ENCODE measurements at regions of chr15 and their contacts with region 1.

Region 1: GRCh38 chr15:98881526-98882520 is 125.8 kb downstream of the PGPEP1L start:
- DNase-seq: no peak
- ATAC-seq: peak; percentile 85
- H3K4me3 ChIP-seq: no peak overlapping the region
- H3K27ac ChIP-seq: no peak overlapping the region
- H3K4me1 ChIP-seq: no peaks in the 10 kb centered on the region
- H3K27me3 ChIP-seq: no peaks in the 10 kb centered on the region
- CTCF ChIP-seq: peak; percentile 50 to 58 (median 53); a peak in 5 of 6 replicates
- EP300 ChIP-seq: no peak
- POLR2A ChIP-seq: no peak
- RAD21 ChIP-seq: peak; percentile 50

Region 2: GRCh38 chr15:98518823-98519561 is 362.8 kb before region 1 on chr15:
- CTCF ChIA-PET with region 1: interaction called, 8 read pairs
- POLR2A ChIA-PET with region 1: no interaction called
- RAD21 ChIA-PET with region 1: interaction called, 7 read pairs
- SMC1A ChIA-PET with region 1: no interaction called
- in situ Hi-C with region 1: no loop called
- intact Hi-C with region 1: loop called (anchors 10 kb)
- DNase-seq: no peak
- ATAC-seq: peak; percentile 95
- H3K4me3 ChIP-seq: no peak overlapping the region
- H3K27ac ChIP-seq: no peak overlapping the region
- H3K4me1 ChIP-seq: no peaks in the 10 kb centered on the region
- H3K27me3 ChIP-seq: no peaks in the 10 kb centered on the region
- CTCF ChIP-seq: peak; percentile 64 to 75 (median 68)
- EP300 ChIP-seq: no peak
- POLR2A ChIP-seq: no peak
- RAD21 ChIP-seq: peak; percentile 75

Region 3: GRCh38 chr15:98653686-98654085 is 228.1 kb before region 1 on chr15:
- CTCF ChIA-PET with region 1: no interaction called
- POLR2A ChIA-PET with region 1: no interaction called
- RAD21 ChIA-PET with region 1: no interaction called
- SMC1A ChIA-PET with region 1: no interaction called
- in situ Hi-C with region 1: no loop called
- intact Hi-C with region 1: no loop called
- DNase-seq: no peak
- ATAC-seq: no peak
- H3K4me3 ChIP-seq: no peak overlapping the region
- H3K27ac ChIP-seq: no peak overlapping the region
- H3K4me1 ChIP-seq: no peaks in the 10 kb centered on the region; the same call in 1 of the 2 replicates
- H3K27me3 ChIP-seq: peaks cover 14 to 25% of the 10 kb centered on the region in 2 experiments
- CTCF ChIP-seq: no peak
- EP300 ChIP-seq: no peak
- POLR2A ChIP-seq: no peak
- RAD21 ChIP-seq: no peak

Region 4: DNA sequence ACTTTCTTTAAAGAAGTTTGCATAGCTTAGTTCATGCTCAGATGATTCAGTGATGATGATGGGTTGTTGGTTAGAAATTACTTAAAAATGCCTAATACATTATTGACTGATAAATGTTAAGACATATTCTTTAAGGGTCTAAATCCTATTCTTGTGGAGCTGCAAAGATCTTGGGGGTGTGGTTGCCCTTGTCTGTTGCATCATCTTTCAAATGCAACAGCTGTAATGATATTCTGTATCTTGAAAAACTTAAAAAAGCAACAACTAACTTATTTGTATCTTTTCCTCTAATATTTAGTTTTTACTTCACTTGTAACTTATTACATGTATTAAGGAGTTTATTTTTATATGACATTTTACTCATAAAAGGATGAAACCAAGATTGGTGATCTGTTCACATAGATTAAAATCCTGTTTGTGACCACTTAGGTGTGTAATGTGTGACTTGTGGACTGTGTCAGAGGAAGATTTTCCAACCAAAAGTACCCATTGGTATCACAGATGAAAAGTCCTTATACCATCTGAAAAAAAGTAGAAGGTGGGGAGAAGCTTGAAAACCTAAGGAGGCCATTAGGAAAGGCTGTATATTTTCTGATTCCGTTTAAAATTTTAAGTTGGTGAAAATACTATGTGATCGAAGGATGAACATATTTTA is 90.6 kb before region 1 on chr15:
- CTCF ChIA-PET with region 1: interaction called, 13 read pairs
- POLR2A ChIA-PET with region 1: no interaction called
- RAD21 ChIA-PET with region 1: no interaction called
- SMC1A ChIA-PET with region 1: interaction called, 3 read pairs
- in situ Hi-C with region 1: no loop called
- intact Hi-C with region 1: no loop called
- DNase-seq: no peak
- ATAC-seq: no peak
- H3K4me3 ChIP-seq: no peak overlapping the region
- H3K27ac ChIP-seq: no peak overlapping the region
- H3K4me1 ChIP-seq: no peaks in the 10 kb centered on the region; the same call in 1 of the 2 replicates
- H3K27me3 ChIP-seq: no peaks in the 10 kb centered on the region
- CTCF ChIP-seq: no peak
- EP300 ChIP-seq: no peak
- POLR2A ChIP-seq: no peak
- RAD21 ChIP-seq: no peak

Region 5: GRCh38 chr15:98896802-98897732 is 15.2 kb after region 1 on chr15:
- CTCF ChIA-PET with region 1: interaction called, 16 read pairs
- POLR2A ChIA-PET with region 1: no interaction called
- RAD21 ChIA-PET with region 1: interaction called, 3 read pairs
- SMC1A ChIA-PET with region 1: interaction called, 12 read pairs
- in situ Hi-C with region 1: no loop called
- intact Hi-C with region 1: no loop called
- DNase-seq: no peak
- ATAC-seq: no peak
- H3K4me3 ChIP-seq: no peak overlapping the region
- H3K27ac ChIP-seq: no peak overlapping the region
- H3K4me1 ChIP-seq: no peaks in the 10 kb centered on the region
- H3K27me3 ChIP-seq: no peaks in the 10 kb centered on the region
- CTCF ChIP-seq: no peak
- EP300 ChIP-seq: no peak
- POLR2A ChIP-seq: no peak
- RAD21 ChIP-seq: no peak

Region 6: GRCh38 chr15:98937413-98938104 is 55.7 kb after region 1 on chr15:
- CTCF ChIA-PET with region 1: interaction called, 8 read pairs
- POLR2A ChIA-PET with region 1: no interaction called
- RAD21 ChIA-PET with region 1: interaction called, 3 read pairs
- SMC1A ChIA-PET with region 1: interaction called, 14 read pairs
- in situ Hi-C with region 1: no loop called
- intact Hi-C with region 1: no loop called
- DNase-seq: peak; percentile 44
- ATAC-seq: peak; percentile 88
- H3K4me3 ChIP-seq: no peak overlapping the region; the same call in 1 of the 2 replicates
- H3K27ac ChIP-seq: peak overlapping the region; percentile 35
- H3K4me1 ChIP-seq: peaks cover 19% of the 10 kb centered on the region
- H3K27me3 ChIP-seq: no peaks in the 10 kb centered on the region
- CTCF ChIP-seq: no peak
- EP300 ChIP-seq: peak; percentile 28 to 47; a peak in 1 of 4 replicates
- POLR2A ChIP-seq: no peak
- RAD21 ChIP-seq: no peak

Region 7: GRCh38 chr15:98954411-98954810 is 72.6 kb after region 1 on chr15:
- CTCF ChIA-PET with region 1: interaction called, 12 read pairs
- POLR2A ChIA-PET with region 1: no interaction called
- RAD21 ChIA-PET with region 1: interaction called, 9 read pairs
- SMC1A ChIA-PET with region 1: interaction called, 19 read pairs
- in situ Hi-C with region 1: no loop called
- intact Hi-C with region 1: no loop called
- DNase-seq: peak; percentile 24
- ATAC-seq: no peak
- H3K4me3 ChIP-seq: no peak overlapping the region
- H3K27ac ChIP-seq: no peak overlapping the region
- H3K4me1 ChIP-seq: peaks cover 25% of the 10 kb centered on the region
- H3K27me3 ChIP-seq: no peaks in the 10 kb centered on the region
- CTCF ChIP-seq: no peak
- EP300 ChIP-seq: no peak
- POLR2A ChIP-seq: no peak
- RAD21 ChIP-seq: no peak

Region 8: DNA sequence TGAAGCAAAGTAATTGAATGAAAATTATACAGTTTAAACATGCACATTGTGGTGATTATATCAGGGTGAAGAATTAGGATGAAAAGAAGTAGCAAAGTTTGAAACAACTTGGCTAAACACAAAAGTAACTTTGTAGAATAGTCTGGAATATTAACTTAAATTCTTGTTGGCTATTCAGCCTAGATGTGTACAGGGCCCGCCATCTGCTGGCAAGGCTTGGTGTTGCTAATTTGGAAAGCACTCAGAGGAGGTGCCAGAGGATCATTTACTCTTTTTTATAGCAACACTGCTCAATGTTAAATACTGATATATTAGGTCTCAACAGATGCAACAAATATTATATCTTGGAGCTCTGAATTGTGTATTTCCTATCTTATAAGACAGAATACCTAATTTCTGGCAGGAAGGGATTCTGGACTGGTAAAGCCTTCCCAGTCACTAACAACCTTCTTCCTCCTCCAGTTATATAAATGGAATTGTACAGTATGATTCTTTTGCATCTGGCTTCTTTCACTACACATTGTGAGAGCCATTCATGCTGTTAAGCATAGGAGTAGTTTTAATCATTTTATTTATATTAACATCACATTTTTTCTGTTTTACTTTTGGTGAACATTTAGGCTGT is 331.5 kb after region 1 on chr15:
- CTCF ChIA-PET with region 1: no interaction called
- POLR2A ChIA-PET with region 1: no interaction called
- RAD21 ChIA-PET with region 1: no interaction called
- SMC1A ChIA-PET with region 1: no interaction called
- in situ Hi-C with region 1: no loop called
- intact Hi-C with region 1: no loop called
- DNase-seq: peak; percentile 4
- ATAC-seq: peak; percentile 93
- H3K4me3 ChIP-seq: no peak overlapping the region
- H3K27ac ChIP-seq: no peak overlapping the region
- H3K4me1 ChIP-seq: no peaks in the 10 kb centered on the region
- H3K27me3 ChIP-seq: no peaks in the 10 kb centered on the region
- CTCF ChIP-seq: peak; percentile 83 to 92 (median 85)
- EP300 ChIP-seq: no peak
- POLR2A ChIP-seq: no peak
- RAD21 ChIP-seq: peak; percentile 94